AG04449 (cell line): ENCODE measurements at regions of chr1 and their contacts with region 1.

Region 1: DNA sequence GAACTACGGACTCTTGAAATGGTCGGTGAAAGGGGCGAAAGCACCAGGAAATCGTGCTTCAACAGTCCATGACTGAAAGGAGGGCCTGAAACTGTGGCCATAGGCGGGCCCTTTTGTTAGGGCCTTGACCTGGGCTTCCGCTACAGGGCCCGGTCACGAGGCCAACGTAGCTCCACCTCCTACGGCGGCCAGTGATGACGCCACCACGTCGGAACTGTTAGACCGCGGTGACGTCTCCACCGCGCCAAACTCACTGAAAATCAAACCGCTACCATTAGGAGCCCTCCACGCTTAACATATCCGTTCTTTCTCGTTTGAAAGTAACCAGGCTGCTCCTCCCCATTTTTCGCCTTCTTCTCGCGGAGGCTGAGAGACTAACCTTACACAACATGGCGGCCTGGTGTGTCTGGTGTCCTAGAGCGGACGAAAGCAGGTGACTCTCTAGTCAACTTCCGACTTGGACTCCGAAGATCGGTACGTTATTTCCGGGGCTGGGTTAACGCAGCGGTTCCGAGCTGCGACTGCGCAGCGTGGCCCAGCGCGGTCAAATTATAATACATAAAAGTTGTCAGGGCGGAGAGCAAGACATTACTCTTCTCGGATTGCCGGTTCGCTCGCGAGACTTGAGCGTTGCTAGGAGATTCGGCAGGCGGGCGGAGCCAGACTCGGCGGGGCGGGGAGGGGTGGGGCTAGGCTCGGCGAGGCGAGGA is 376 bp upstream of the CACYBP start:
- DNase-seq: peak; percentile 98
- H3K4me3 ChIP-seq: peak overlapping the region; percentile 86
- CTCF ChIP-seq: no peak

Region 2: DNA sequence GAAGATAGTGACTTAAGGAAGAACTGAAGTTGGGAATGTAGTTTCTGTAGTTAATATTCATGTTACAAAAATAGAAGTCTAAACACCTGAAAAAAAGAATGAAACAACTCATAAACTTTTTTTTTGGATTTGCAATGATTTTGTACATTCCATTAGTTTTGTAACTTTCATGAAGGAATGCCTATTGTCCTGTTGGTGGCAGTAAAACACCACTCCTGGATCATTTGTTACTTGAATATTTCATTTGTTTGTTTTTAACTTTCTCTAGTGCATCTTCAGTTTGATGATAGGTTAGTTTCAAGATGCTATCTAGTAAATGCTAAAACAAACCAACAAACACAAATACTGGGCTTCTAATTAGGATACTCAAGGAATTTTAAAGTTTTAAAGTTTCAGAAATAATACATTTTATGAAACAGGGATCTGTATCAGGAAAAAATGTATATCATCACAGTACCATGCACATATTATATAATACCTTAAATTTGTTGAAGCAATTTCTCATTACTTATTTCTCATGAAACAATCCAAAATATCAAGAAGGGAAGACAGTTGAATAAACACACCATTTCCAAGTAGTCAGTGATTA is 229.3 kb before region 1 on chr1:
- CTCF ChIA-PET with region 1: interaction called, 71 read pairs
- POLR2A ChIA-PET with region 1: no interaction called
- DNase-seq: no peak
- H3K4me3 ChIP-seq: no peak overlapping the region
- CTCF ChIP-seq: peak; percentile 61

Region 3: GRCh38 chr1:174789399-174789798 is 210.0 kb before region 1 on chr1:
- CTCF ChIA-PET with region 1: interaction called, 5 read pairs
- POLR2A ChIA-PET with region 1: interaction called, 10 read pairs
- DNase-seq: peak; percentile 61
- H3K4me3 ChIP-seq: no peak overlapping the region
- CTCF ChIP-seq: no peak

Region 4: DNA sequence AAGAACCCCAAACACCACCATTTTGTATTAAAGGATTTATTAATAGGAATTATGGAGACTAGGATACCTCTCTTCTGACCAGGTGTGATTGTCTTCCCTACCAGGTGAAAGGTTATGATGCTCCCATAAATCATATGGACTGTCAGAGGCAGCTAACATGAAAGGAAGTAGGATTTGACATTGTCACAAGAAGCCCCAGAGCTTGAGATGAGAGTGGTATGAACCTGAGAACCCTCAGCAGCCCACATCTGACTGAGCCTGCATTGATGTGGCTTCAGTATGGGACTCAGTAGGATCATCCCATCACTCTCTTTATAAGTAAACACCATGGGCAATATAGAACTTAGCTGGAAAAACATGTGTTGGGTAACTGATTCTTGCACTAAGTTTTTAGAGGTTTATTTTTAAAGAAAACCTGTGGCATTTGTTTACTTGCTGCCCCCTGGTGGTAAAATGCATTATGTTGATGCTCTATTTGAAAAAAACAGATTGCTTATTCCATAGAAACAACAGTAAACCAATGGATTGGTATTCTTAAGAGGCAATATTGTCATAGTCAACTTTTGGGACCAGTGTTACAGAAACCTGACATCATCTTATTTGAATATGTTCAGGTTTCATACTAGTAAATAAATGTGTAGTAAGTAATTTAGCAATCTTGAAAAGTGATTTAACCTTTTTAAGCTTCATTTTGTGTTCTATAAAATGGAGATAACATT is 16.2 kb before region 1 on chr1:
- CTCF ChIA-PET with region 1: interaction called, 22 read pairs
- POLR2A ChIA-PET with region 1: no interaction called
- DNase-seq: no peak
- H3K4me3 ChIP-seq: no peak overlapping the region
- CTCF ChIP-seq: peak; percentile 12

Region 5: GRCh38 chr1:175009532-175009931 is 10.2 kb after region 1 on chr1:
- CTCF ChIA-PET with region 1: interaction called, 13 read pairs
- POLR2A ChIA-PET with region 1: interaction called, 16 read pairs
- DNase-seq: no peak
- H3K4me3 ChIP-seq: no peak overlapping the region
- CTCF ChIP-seq: no peak

Region 6: DNA sequence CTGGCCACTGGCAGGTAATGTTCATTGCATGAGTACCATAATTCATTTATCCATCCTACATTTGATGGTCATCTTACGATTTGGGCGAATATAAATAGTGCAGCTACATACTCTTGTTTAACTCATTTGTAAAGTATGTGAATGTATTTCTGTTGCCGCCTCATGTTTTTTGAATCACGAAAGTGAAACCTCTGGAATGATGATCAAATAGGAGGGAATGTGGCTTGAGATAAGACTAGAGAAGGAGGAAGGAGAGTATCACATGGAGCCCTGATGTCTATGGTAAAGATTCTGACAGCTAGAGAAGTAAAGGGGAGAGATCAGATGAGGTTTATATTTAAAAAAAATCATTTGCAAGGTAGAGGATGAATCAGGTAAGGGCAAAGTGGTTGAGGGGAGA is 15.9 kb after region 1 on chr1:
- CTCF ChIA-PET with region 1: interaction called, 13 read pairs
- POLR2A ChIA-PET with region 1: interaction called, 16 read pairs
- DNase-seq: peak; percentile 60
- H3K4me3 ChIP-seq: no peak overlapping the region
- CTCF ChIP-seq: no peak

Region 7: GRCh38 chr1:175023043-175023921 is 23.9 kb after region 1 on chr1 and contains the start of gene MRPS14:
- CTCF ChIA-PET with region 1: interaction called, 5 read pairs
- POLR2A ChIA-PET with region 1: interaction called, 35 read pairs
- DNase-seq: peak; percentile 87
- H3K4me3 ChIP-seq: peak within 1 kb of the TSS; percentile 94
- CTCF ChIP-seq: no peak